ENCODE measurements at regions of chr16 and their contacts with region 1.

Region 1: DNA sequence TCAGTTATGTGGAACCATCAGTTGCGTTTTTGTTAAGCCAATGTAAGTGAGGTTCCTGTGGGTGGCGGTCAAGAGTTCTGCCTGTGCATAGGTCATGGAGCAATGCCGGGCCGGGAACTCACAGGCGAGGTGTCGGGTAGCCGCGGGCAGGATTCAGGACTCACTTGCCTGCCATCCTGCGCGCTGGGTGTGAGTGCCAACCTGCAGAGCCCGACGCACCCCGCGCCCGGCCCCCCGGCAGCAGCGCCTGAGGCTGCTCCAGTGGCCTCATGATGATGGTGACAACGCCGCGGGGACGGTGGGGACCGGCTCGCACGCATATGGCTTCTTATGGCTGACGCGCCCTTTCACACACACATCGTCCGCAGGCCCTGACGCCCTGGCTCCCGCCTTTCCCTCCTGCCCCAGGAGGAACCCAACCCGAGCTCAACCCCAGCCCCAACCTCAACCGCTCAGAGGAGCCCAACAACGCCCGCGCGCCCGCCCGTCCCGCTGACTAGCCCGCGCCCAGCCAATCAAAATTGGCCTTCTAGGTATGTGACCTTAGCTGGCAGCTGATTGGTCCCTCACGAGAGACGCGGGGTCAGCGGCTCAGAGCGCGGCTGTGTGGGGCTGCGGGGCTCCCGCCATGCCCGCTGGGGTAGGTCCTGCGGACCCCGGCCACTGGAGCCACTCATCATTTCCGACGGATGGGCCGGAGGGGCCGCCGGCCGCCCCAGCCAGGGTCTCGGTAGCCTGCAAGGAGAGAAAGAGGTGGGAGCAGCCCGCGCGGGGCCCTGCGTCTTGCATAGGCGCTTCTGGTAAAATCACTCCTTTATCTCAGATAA is at the start of gene C16orf95:
- DNase-seq: peak; percentile 97
- ATAC-seq: peak; percentile 91
- H3K4me3 Mint-ChIP-seq: peak within 1 kb of the TSS; percentile 91
- H3K27ac Mint-ChIP-seq: peak within 1 kb of the TSS; percentile 95
- H3K4me1 Mint-ChIP-seq: peaks cover 13% of the 10 kb centered on the region
- H3K27me3 Mint-ChIP-seq: no peaks in the 10 kb centered on the region
- CTCF ChIP-seq: peak; percentile 71
- total RNA-seq, gene C16orf95: 11.5 to 13.6 TPM

Region 2: DNA sequence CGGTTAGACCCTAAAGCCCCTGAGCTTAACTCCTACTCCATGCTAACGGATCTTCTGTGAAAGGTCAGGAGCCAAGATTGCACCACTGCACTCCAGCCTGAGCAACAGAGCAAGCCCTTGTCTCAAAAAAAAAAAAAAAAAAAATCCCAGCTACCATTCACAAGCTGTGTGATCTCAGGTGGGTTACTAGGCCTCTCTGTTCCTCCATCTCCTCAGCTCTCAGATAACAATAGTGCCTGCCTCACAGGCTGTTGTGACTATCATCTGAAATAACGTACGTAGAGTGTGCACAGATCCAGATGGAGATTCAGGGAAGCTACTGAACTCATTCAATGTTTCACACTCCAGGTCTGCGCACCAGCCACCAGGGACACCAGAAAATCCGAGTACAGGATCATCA is 57.7 kb before region 1 on chr16:
- CTCF ChIA-PET with region 1: no interaction called
- POLR2A ChIA-PET with region 1: no interaction called
- intact Hi-C with region 1: no loop called
- DNase-seq: no peak
- ATAC-seq: no peak
- H3K4me3 Mint-ChIP-seq: no peak overlapping the region
- H3K27ac Mint-ChIP-seq: no peak overlapping the region
- H3K4me1 Mint-ChIP-seq: no peaks in the 10 kb centered on the region
- H3K27me3 Mint-ChIP-seq: no peaks in the 10 kb centered on the region
- CTCF ChIP-seq: no peak

Region 3: GRCh38 chr16:87387942-87388817 is 71.0 kb after region 1 on chr16:
- CTCF ChIA-PET with region 1: interaction called, 6 read pairs
- POLR2A ChIA-PET with region 1: interaction called, 32 read pairs
- intact Hi-C with region 1: loop called (anchors 5 kb)
- DNase-seq: peak; percentile 94
- ATAC-seq: peak; percentile 68
- H3K4me3 Mint-ChIP-seq: peak overlapping the region; percentile 49
- H3K27ac Mint-ChIP-seq: peak overlapping the region; percentile 97
- H3K4me1 Mint-ChIP-seq: peaks cover 39% of the 10 kb centered on the region
- H3K27me3 Mint-ChIP-seq: peaks cover 2% of the 10 kb centered on the region
- CTCF ChIP-seq: no peak

Region 4: GRCh38 chr16:87393680-87394055 is 76.5 kb after region 1 on chr16:
- CTCF ChIA-PET with region 1: interaction called, 12 read pairs
- POLR2A ChIA-PET with region 1: interaction called, 19 read pairs
- intact Hi-C with region 1: loop called (anchors 5 kb)
- DNase-seq: no peak
- ATAC-seq: no peak
- H3K4me3 Mint-ChIP-seq: peak overlapping the region; percentile 83
- H3K27ac Mint-ChIP-seq: peak overlapping the region; percentile 90
- H3K4me1 Mint-ChIP-seq: peaks cover 43% of the 10 kb centered on the region
- H3K27me3 Mint-ChIP-seq: no peaks in the 10 kb centered on the region
- CTCF ChIP-seq: no peak